Heart right ventricle (tissue), 16 donors: ENCODE measurements at regions of chr7 and their contacts with region 1.

Region 1: DNA sequence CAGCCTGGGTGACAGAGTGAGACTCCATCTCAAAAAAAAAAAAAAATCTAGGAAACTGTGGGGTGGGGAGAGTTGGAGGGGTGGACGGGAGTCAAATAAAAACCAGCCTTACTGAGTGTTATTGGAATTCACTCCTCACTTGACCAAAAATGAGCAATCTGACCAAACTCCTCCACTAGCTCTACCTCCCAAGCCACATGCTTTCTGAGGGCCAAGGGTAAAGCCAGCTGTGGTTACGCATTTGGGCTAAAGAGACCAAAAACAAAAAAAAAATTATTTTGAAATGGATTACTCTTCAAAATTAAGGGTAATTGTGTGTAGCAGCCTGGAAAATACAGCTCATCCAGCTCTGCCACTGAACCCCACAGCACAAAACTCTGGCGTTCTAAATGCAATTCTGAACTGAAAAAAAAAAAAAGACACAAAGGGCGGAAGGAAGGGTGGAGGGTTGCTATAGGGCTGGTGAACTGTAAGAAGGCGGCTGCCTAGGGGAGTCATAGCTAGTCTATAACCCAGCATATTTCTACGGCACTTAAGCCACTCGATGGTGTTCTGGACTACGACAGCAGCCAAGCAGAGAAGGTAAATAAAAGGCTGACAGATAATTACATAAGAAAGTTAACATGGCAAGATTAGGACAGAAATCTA is 7.8 kb downstream of the ELMO1 start:
- DNase-seq: peak in 1 of 2 donors; percentile 41
- ATAC-seq: peak; percentile 76 to 93 (median 90)
- H3K4me3 ChIP-seq: peak overlapping the region in 4 of 10 donors; percentile 2 to 20 (median 12)
- H3K27ac ChIP-seq: peak overlapping the region; percentile 72 to 93 (median 78)
- H3K4me1 ChIP-seq: peaks cover 2 to 74% (median 52%) of the 10 kb centered on the region in 9 donors
- H3K27me3 ChIP-seq: peaks cover 0 to under 1% (median 0%) of the 10 kb centered on the region in 7 donors
- CTCF ChIP-seq: no peak

Region 2: DNA sequence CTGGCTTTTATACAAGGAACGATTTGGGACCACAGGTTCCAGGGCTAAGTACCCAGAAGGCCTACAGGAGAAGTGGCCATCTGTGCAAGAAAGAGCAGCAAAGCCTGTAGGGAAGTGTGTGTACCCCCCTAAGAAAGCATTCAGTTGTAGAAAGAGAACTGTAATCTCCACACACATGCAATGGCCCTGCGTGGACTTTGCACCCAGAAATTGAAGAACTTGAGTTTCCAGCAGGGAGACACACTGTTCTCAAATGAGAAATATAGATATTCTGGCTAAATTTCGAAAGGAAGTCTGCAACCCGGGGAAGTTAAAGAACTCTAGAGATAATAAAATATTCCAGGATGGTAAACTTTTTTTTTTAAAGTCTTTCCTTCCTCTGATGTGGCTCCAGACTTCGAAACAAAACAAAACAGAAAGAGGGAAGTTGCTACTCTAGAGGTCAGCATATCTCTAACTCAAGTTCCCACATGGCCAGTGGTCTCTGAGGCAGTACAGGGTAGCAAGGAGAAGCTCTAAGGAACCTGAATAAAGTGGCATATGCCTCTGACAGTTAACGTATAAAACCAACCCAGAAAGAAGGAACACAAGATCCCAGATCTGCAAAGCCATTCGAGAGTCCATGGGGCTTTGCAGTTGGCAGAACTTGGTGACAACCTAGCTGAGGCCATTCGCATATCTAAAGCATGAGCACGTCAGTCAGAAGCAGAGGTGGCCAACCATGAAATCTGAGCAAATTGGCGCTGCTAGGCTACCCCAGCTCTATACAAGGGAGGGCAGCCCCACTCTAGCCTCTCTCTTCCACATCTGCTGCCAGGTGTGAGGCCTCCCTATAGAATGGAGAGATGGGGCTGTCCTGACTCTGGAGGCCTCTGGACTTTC is 48.8 kb before region 1 on chr7:
- intact Hi-C with region 1: loop called in 1 of 10 experiments (anchors 2 kb)
- DNase-seq: no peak
- ATAC-seq: peak in 6 of 8 donors; percentile 52 to 73 (median 64)
- H3K4me3 ChIP-seq: no peak overlapping the region
- H3K27ac ChIP-seq: peak overlapping the region in 6 of 10 donors; percentile 1 to 80 (median 54)
- H3K4me1 ChIP-seq: peaks cover 5 to 49% (median 31%) of the 10 kb centered on the region in 9 donors
- H3K27me3 ChIP-seq: no peaks in the 10 kb centered on the region
- CTCF ChIP-seq: no peak